Posterior cingulate gyrus (tissue), 11 donors: ENCODE measurements at regions of chr14 and their contacts with region 1.

Region 1: GRCh38 chr14:94001501-94002396 is 4.6 kb downstream of the CCDC197 start:
- DNase-seq: peak in 9 of 10 donors; percentile 43 to 95 (median 64)

Region 2: DNA sequence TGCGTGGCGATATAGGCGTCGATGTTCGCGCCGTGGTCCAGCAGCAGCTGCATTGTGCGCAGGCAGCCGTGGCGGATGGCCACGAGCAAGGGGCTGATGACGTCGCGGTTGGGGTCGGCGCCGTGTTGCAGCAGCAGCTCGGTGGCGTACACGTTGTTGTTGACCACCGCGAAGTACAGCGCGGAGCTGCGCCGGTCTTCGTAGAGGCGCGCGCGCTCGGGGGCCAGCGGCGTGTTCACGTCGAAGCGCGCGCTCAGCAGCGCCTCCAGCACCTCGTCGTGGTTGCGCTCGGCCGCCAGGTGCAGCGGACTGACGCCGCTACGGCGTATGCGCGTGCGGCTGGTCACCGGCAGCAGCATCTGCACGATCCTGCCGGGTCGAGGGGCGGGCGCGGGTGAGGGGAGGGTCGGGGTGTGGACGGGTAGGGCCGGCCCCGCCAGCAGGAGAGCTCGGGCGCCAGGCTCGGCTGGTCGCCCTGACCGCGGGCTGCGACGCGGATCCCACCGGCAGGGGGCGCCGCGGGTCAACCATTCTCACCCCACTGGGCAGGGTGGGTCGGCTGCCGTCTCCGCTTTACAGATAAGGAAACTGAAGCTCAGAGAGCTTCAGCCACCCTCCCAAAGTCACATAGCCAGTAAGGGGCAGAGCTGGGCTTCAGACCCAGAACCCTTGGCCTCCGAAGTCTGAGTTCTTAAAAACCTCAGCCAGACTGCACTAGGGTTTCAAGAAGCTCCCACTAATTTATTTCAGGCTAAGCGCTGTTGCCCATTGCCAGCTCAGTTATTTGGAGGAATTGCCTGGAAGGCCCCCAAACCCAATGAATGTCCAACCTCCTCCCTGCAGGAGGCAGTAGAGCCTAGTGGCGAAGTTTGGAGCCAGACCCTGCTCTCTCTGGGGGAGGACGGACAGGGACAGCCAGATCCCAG is 62.2 kb before region 1 on chr14:
- intact Hi-C with region 1: loop called (anchors 1 kb)
- DNase-seq: peak; percentile 47 to 96 (median 83)

Region 3: GRCh38 chr14:94115058-94115591 is 113.4 kb after region 1 on chr14:
- intact Hi-C with region 1: no loop called
- DNase-seq: no peak